B cell (primary cell): ENCODE measurements at regions of chr19 and their contacts with region 1.

Region 1: DNA sequence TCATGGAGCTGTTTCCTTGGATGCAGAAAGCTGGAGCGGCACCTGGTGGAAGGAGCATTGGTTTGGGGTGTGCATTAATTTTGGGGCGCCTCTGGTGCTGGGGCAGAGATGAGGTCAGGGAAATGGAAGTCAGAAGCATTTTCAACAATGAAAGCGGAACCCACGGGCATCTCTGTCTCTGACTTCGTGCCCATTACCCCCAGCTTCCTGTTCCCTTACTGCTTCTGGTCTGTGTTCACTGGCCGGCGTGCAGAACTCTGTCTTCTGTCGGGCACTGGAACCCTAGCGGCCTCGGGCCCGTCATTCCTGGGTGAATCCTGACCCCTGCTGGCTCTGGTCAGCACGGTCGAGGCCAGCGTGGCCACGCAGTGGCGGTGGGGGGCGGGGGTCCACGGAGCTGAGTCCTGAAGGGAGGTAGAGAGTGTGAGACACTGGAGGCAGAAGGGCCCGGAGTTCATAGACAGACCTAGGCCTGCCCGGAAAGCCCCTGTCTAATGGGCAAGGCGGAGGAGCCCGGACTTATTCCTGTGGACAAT is 7.9 kb upstream of the LINGO3 start:
- DNase-seq: peak; percentile 74
- ATAC-seq: peak; percentile 75
- H3K4me3 ChIP-seq: peak overlapping the region in 1 of 5 experiments; percentile 19
- H3K4me3 Mint-ChIP-seq: peak overlapping the region; percentile 74
- H3K27ac ChIP-seq: peak overlapping the region; percentile 62 to 75
- H3K27ac Mint-ChIP-seq: peak overlapping the region; percentile 93
- H3K4me1 ChIP-seq: peaks cover 46 to 55% of the 10 kb centered on the region in 2 donors
- H3K4me1 Mint-ChIP-seq: peaks cover 51% of the 10 kb centered on the region
- H3K27me3 ChIP-seq: peaks cover 0 to 10% (median 3%) of the 10 kb centered on the region in 4 experiments
- H3K27me3 Mint-ChIP-seq: no peaks in the 10 kb centered on the region
- CTCF ChIP-seq: no peak

Region 2: DNA sequence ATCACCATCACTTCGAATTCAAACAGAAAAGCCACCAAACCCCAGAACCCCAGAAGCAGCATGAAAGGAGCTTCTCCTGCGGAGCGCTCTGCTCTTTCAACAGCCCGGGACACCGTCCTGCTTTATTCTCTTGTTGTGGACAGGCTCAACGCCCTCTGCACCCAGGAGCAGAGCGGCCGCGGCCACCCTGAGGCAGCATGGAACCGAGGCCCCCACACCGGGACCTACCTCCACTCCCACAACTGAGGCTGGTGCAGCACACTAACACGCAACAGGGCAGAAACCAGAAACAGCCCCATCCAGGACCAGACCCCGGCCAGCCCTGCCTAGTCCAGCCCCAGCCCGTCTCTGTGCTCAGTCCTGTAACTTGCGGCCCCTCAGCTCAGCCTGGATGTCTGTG is 171.7 kb before region 1 on chr19:
- CTCF ChIA-PET with region 1: no interaction called
- POLR2A ChIA-PET with region 1: no interaction called
- intact Hi-C with region 1: no loop called
- DNase-seq: no peak
- ATAC-seq: no peak
- H3K4me3 ChIP-seq: no peak overlapping the region
- H3K4me3 Mint-ChIP-seq: no peak overlapping the region
- H3K27ac ChIP-seq: no peak overlapping the region
- H3K27ac Mint-ChIP-seq: no peak overlapping the region
- H3K4me1 ChIP-seq: peaks cover 0 to 12% of the 10 kb centered on the region in 2 donors
- H3K4me1 Mint-ChIP-seq: peaks cover 29% of the 10 kb centered on the region
- H3K27me3 ChIP-seq: no peaks in the 10 kb centered on the region
- H3K27me3 Mint-ChIP-seq: no peaks in the 10 kb centered on the region
- CTCF ChIP-seq: no peak

Region 3: GRCh38 chr19:2253106-2254053 is 62.5 kb before region 1 on chr19:
- CTCF ChIA-PET with region 1: interaction called, 14 read pairs
- POLR2A ChIA-PET with region 1: interaction called, 3 read pairs
- intact Hi-C with region 1: no loop called
- DNase-seq: peak; percentile 77
- ATAC-seq: peak; percentile 40
- H3K4me3 ChIP-seq: peak overlapping the region; percentile 30 to 70 (median 55)
- H3K4me3 Mint-ChIP-seq: peak overlapping the region; percentile 88
- H3K27ac ChIP-seq: no peak overlapping the region
- H3K27ac Mint-ChIP-seq: peak overlapping the region; percentile 65
- H3K4me1 ChIP-seq: peaks cover 54 to 68% of the 10 kb centered on the region in 2 donors
- H3K4me1 Mint-ChIP-seq: peaks cover 43% of the 10 kb centered on the region
- H3K27me3 ChIP-seq: peaks cover 0 to 38% (median 14%) of the 10 kb centered on the region in 4 experiments
- H3K27me3 Mint-ChIP-seq: no peaks in the 10 kb centered on the region
- CTCF ChIP-seq: peak; percentile 63

Region 4: DNA sequence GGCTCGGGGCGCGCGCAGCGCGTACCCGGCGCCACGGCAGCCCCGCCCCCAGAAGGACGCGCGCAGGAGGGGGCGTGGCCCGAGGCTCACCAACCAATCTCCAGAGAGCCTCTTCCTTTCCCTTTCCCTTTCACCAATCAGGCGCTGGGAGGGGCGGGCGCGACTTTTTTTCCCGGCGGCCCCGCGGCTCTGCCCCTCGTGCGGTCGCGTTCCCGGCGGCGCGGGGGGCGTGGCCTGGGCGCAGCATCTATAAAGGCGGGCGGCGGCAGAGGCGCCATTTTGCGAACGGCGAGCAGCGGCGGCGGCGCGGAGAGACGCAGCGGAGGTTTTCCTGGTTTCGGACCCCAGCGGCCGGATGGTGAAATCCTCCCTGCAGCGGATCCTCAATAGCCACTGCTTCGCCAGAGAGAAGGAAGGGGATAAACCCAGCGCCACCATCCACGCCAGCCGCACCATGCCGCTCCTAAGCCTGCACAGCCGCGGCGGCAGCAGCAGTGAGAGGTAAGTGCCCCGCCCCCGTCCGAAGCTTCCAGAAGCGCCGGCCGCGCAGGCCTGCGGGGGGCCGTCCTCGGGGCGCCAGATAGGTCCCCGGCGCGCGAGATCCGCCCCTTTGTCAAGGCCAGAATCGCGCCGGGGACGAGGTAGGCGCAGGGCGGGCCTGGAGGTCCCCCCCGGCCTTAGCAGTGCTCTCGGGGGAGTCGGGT is 46.5 kb before region 1 on chr19:
- CTCF ChIA-PET with region 1: interaction called, 43 read pairs
- POLR2A ChIA-PET with region 1: interaction called, 9 read pairs
- intact Hi-C with region 1: no loop called
- DNase-seq: peak; percentile 99
- ATAC-seq: peak; percentile 66
- H3K4me3 ChIP-seq: peak overlapping the region; percentile 59 to 100 (median 99)
- H3K4me3 Mint-ChIP-seq: peak overlapping the region; percentile 89
- H3K27ac ChIP-seq: peak overlapping the region; percentile 79 to 94
- H3K27ac Mint-ChIP-seq: peak overlapping the region; percentile 97
- H3K4me1 ChIP-seq: peaks cover 56 to 66% of the 10 kb centered on the region in 2 donors
- H3K4me1 Mint-ChIP-seq: peaks cover 52% of the 10 kb centered on the region
- H3K27me3 ChIP-seq: no peaks in the 10 kb centered on the region
- H3K27me3 Mint-ChIP-seq: no peaks in the 10 kb centered on the region
- CTCF ChIP-seq: no peak

Region 5: GRCh38 chr19:2274931-2275535 is 40.9 kb before region 1 on chr19:
- CTCF ChIA-PET with region 1: interaction called, 43 read pairs
- POLR2A ChIA-PET with region 1: interaction called, 9 read pairs
- intact Hi-C with region 1: loop called (anchors 5 kb)
- DNase-seq: peak; percentile 75
- ATAC-seq: no peak
- H3K4me3 ChIP-seq: no peak overlapping the region
- H3K4me3 Mint-ChIP-seq: peak overlapping the region; percentile 59
- H3K27ac ChIP-seq: peak overlapping the region; percentile 18 to 41
- H3K27ac Mint-ChIP-seq: peak overlapping the region; percentile 84
- H3K4me1 ChIP-seq: peaks cover 37 to 53% of the 10 kb centered on the region in 2 donors
- H3K4me1 Mint-ChIP-seq: peaks cover 46% of the 10 kb centered on the region
- H3K27me3 ChIP-seq: no peaks in the 10 kb centered on the region
- H3K27me3 Mint-ChIP-seq: no peaks in the 10 kb centered on the region
- CTCF ChIP-seq: peak; percentile 48

Region 6: DNA sequence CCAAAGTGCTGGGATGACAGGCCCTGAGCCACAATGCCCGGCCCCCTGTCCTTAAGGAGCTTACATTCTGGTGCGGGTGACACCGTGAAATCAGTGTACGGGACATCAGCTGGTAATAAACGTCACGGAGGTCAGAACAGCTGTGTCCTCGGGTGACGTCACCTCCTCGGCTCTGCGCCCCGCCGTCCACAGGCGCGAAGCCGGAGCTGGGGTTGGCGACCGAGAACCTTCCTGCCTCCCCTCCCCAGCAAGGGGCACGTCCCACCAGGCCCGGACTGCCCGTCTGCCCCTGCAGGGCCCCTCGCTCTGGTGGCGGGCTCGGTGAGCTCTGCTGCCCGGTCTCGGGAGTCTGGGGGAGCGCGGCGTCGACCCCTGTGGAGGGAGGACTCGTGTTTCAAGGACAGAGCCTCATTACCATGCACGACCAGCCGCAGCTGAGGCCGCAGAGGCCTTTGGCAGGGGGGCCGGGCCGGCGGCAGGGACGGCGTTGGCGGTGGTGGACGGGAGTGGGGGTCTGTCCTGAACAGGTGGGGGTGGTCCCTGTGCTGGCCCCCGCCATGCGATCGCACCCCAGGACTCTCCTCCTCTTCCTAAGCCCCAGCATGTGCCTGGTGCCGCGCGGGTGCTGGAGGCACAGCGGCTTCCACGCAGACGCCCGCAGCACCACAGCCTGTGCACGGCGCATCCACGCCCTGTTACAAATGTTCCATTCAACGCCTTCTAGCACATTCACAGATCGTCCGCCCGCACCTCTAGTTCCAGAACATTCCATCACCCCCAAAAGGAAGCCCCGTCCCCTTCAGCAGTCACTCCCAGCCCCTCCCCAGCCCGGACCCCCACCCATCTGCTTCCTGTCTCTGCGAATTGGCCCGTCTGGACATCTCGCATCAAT is 13.3 kb before region 1 on chr19:
- CTCF ChIA-PET with region 1: interaction called, 11 read pairs
- POLR2A ChIA-PET with region 1: interaction called, 35 read pairs
- intact Hi-C with region 1: no loop called
- DNase-seq: peak; percentile 78
- ATAC-seq: peak; percentile 48
- H3K4me3 ChIP-seq: peak overlapping the region in 4 of 5 experiments; percentile 25 to 65 (median 43)
- H3K4me3 Mint-ChIP-seq: peak overlapping the region; percentile 87
- H3K27ac ChIP-seq: peak overlapping the region; percentile 64 to 78
- H3K27ac Mint-ChIP-seq: peak overlapping the region; percentile 86
- H3K4me1 ChIP-seq: peaks cover 45 to 66% of the 10 kb centered on the region in 2 donors
- H3K4me1 Mint-ChIP-seq: peaks cover 43% of the 10 kb centered on the region
- H3K27me3 ChIP-seq: peaks cover 0 to 18% (median 5%) of the 10 kb centered on the region in 4 experiments
- H3K27me3 Mint-ChIP-seq: peaks cover 4% of the 10 kb centered on the region
- CTCF ChIP-seq: no peak

Region 7: GRCh38 chr19:2328401-2329148 is 12.7 kb after region 1 on chr19 and contains the starts of genes LSM7 and SPPL2B:
- CTCF ChIA-PET with region 1: interaction called, 15 read pairs
- POLR2A ChIA-PET with region 1: interaction called, 25 read pairs
- intact Hi-C with region 1: loop called (anchors 2 kb)
- DNase-seq: peak; percentile 95
- ATAC-seq: peak; percentile 42
- H3K4me3 ChIP-seq: peak within 1 kb of the TSS; percentile 66 to 97 (median 92)
- H3K4me3 Mint-ChIP-seq: peak within 1 kb of the TSS; percentile 96
- H3K27ac ChIP-seq: peak within 1 kb of the TSS; percentile 71 to 90
- H3K27ac Mint-ChIP-seq: peak within 1 kb of the TSS; percentile 98
- H3K4me1 ChIP-seq: peaks cover 81 to 92% of the 10 kb centered on the region in 2 donors
- H3K4me1 Mint-ChIP-seq: peaks cover 81% of the 10 kb centered on the region
- H3K27me3 ChIP-seq: no peaks in the 10 kb centered on the region
- H3K27me3 Mint-ChIP-seq: no peaks in the 10 kb centered on the region
- CTCF ChIP-seq: no peak
- total RNA-seq, gene LSM7: 180 and 201 TPM in 2 replicates
- total RNA-seq, gene SPPL2B: 479 and 511 TPM in 2 replicates

Region 8: GRCh38 chr19:2391118-2391725 is 75.3 kb after region 1 on chr19:
- CTCF ChIA-PET with region 1: interaction called, 10 read pairs
- POLR2A ChIA-PET with region 1: interaction called, 3 read pairs
- intact Hi-C with region 1: no loop called
- DNase-seq: peak; percentile 82
- ATAC-seq: peak; percentile 51
- H3K4me3 ChIP-seq: no peak overlapping the region
- H3K4me3 Mint-ChIP-seq: peak overlapping the region; percentile 61
- H3K27ac ChIP-seq: no peak overlapping the region
- H3K27ac Mint-ChIP-seq: peak overlapping the region; percentile 70
- H3K4me1 ChIP-seq: peaks cover 16 to 31% of the 10 kb centered on the region in 2 donors
- H3K4me1 Mint-ChIP-seq: peaks cover 32% of the 10 kb centered on the region
- H3K27me3 ChIP-seq: no peaks in the 10 kb centered on the region
- H3K27me3 Mint-ChIP-seq: no peaks in the 10 kb centered on the region
- CTCF ChIP-seq: peak; percentile 92